Caco-2 (cell line): ENCODE measurements at regions of chr7 and their contacts with region 1.

Region 1: GRCh38 chr7:73726083-73726466 is 6.6 kb upstream of the STX1A start:
- DNase-seq: no peak
- H3K4me3 ChIP-seq: no peak overlapping the region
- H3K4me3 Mint-ChIP-seq: no peak overlapping the region
- H3K27ac Mint-ChIP-seq: no peak overlapping the region
- H3K4me1 ChIP-seq: no peaks in the 10 kb centered on the region
- H3K4me1 Mint-ChIP-seq: no peaks in the 10 kb centered on the region
- H3K27me3 ChIP-seq: no peaks in the 10 kb centered on the region
- H3K27me3 Mint-ChIP-seq: no peaks in the 10 kb centered on the region
- CTCF ChIP-seq: no peak

Region 2: DNA sequence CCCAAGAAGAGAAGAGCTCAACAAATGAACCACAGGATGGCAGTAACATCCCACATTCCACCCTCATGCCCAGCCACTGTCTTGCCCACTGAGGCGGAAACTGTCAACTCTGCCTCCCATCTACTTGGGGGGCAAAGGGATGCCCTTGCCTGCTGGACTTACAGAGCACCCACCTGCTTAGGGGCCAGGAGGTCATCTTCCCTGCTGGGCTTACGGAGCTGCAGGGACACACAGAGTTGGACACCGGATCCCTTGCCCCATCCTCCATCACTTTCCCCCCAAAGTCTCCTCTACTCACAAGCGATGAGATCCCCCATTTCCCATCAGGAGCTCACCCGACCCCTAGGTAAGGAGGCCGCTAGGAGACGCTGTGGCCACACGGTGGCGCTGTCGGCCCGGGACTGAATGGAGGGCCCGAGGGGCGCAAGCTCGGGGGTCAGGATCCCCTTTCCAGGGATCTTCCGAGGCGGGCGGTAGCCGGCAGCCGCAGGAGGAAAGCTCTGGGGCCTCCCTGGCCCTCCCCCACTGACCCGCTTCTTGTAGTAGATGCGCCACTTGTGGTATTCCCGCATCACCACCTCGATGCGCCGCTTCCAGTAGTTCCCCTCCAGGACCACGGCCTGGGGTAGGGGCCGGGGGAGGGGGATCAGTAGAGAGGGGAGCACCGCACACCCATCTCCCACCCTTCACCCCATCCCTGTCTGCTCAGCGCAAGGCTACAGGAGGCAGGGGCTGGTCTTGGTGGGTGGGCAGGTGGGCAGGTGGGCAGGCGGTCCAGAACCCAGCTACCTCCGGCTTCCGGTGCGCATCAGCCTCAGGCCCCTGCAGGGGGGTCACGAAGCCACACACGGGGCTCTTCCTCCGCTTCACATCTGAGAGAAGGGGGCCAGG is 119.0 kb before region 1 on chr7:
- CTCF ChIA-PET with region 1: interaction called, 17 read pairs
- POLR2A ChIA-PET with region 1: no interaction called
- intact Hi-C with region 1: loop called (anchors 1 kb)
- DNase-seq: peak; percentile 63 to 77
- H3K4me3 ChIP-seq: no peak overlapping the region
- H3K4me3 Mint-ChIP-seq: no peak overlapping the region
- H3K27ac Mint-ChIP-seq: no peak overlapping the region
- H3K4me1 ChIP-seq: peaks cover 5% of the 10 kb centered on the region; the same call in 1 of the 2 replicates
- H3K4me1 Mint-ChIP-seq: peaks cover 7% of the 10 kb centered on the region
- H3K27me3 ChIP-seq: no peaks in the 10 kb centered on the region
- H3K27me3 Mint-ChIP-seq: no peaks in the 10 kb centered on the region
- CTCF ChIP-seq: peak; percentile 93 to 94

Region 3: DNA sequence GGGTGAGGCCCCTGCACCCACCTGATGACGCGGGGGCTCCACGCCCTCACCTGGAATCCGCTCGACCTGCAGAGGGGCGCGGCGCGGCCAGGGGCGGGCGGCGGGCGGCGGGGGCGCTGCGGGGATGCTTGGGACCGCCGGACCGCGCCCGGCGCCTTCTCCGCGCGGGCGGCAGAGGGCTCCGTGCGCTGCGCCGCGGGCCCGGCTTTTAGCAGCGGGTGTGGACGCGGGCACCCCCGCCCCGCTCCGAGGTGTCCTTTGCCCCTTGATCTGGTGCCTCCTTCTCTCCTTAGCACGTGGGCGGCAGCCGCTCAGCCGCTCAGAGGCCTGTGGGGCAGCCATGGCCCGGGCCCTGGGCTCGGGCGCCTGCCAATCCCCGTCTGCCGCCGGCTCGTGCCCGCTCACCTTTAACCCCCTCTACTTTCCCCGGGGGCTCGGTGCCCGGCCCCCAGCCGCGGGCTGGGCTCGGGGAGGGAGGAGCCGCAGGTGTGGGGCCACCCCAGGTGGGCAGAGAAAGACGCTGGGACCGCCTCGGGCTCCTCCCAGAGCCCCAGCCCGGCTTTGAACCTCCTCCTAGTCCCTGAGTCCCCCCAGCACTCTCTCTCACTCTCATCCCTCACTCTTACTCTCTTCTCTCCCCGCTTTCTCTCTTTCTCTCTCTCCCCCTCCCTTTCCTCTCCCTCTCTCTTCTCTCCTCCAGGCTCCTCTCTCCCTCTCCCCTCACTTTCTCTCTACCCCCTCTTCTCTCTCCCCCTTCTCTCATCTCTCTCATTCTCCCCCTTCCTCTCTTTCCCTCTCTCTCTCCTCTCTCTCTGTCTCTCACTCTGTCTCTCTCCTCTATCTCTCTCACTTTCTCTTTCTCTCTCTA is 78.1 kb before region 1 on chr7:
- CTCF ChIA-PET with region 1: interaction called, 5 read pairs
- POLR2A ChIA-PET with region 1: no interaction called
- intact Hi-C with region 1: loop called (anchors 2 kb)
- DNase-seq: peak; percentile 84 to 85
- H3K4me3 ChIP-seq: peak overlapping the region; percentile 53
- H3K4me3 Mint-ChIP-seq: peak overlapping the region; percentile 79
- H3K27ac Mint-ChIP-seq: peak overlapping the region; percentile 56
- H3K4me1 ChIP-seq: no peaks in the 10 kb centered on the region; the same call in 1 of the 2 replicates
- H3K4me1 Mint-ChIP-seq: peaks cover 17% of the 10 kb centered on the region
- H3K27me3 ChIP-seq: no peaks in the 10 kb centered on the region
- H3K27me3 Mint-ChIP-seq: peaks cover 6% of the 10 kb centered on the region
- CTCF ChIP-seq: peak in 1 of 2 experiments; percentile 12